K562 (cell line): ENCODE measurements at regions of chr9 and their contacts with region 1.

Region 1: GRCh38 chr9:76297721-76298239 is 96.4 kb downstream of the RFK start:
- DNase-seq: no peak
- ATAC-seq: 0 out of 3 replicates have a peak, but pooled peaks have one; percentile 44
- H3K4me3 ChIP-seq: no peak overlapping the region
- H3K27ac ChIP-seq: no peak overlapping the region
- H3K4me1 ChIP-seq: no peaks in the 10 kb centered on the region
- H3K27me3 ChIP-seq: peaks cover 2 to 17% of the 10 kb centered on the region in 2 experiments; a peak in 3 of 5 replicates
- CTCF ChIP-seq: no peak
- EP300 ChIP-seq: no peak
- POLR2A ChIP-seq: no peak
- RAD21 ChIP-seq: no peak

Region 2: DNA sequence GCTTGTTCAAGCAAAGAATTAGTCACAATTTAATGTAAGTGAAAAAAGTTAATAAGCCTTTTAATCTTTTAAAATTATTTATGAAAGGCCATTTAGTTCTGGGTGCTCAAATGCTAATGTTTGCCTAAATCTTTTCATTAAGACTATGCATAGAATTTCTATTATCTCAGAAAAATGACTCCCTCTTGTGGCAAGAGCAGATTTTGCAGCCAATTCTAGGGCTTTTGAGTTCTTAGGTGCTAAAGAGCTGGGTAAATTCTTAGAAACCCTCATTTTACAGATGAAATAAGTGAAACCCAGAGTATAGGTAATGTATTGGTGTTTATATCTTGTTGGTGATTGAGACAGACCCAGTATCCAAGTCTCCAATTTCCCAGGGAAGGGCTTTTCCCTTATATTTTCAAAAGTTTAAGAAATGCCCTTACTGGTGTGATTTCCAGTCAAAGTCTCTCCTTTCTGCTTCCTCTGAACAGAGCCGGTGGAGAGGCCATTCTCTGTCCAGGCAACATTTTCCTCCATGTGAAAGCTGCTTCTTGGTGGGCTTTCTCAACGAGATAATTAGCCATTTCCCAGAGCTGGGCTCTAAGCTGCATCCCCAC is 431.4 kb before region 1 on chr9:
- CTCF ChIA-PET with region 1: no interaction called
- POLR2A ChIA-PET with region 1: no interaction called
- in situ Hi-C with region 1: no loop called
- intact Hi-C with region 1: loop called (anchors 10 kb)
- DNase-seq: peak; percentile 5 to 38 (median 8)
- ATAC-seq: no peak
- H3K4me3 ChIP-seq: no peak overlapping the region
- H3K27ac ChIP-seq: no peak overlapping the region
- H3K4me1 ChIP-seq: no peaks in the 10 kb centered on the region
- H3K27me3 ChIP-seq: no peaks in the 10 kb centered on the region
- CTCF ChIP-seq: peak; percentile 27 to 56 (median 45); a peak in 4 of 6 replicates
- EP300 ChIP-seq: no peak
- POLR2A ChIP-seq: no peak
- RAD21 ChIP-seq: peak; percentile 14 to 43

Region 3: DNA sequence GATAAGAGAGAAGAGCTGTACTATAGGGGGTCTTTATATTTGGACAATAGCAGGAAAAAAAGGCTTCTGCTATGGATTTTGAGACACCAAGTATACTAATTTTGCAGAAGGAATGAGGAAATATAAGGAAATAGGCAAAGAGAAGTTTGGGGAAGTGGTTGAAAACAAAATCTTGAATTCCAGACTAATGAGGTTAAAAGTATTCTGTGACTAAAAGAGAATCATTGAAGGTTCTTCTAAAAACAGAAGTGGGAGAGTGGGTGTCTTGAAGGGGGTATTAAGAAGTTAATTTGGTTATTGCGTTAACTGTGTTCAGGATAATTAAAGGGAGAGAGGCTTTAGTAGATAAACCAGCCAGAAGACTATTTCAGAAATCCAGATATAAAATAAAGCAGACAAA is 52.3 kb before region 1 on chr9:
- CTCF ChIA-PET with region 1: no interaction called
- POLR2A ChIA-PET with region 1: no interaction called
- in situ Hi-C with region 1: no loop called
- intact Hi-C with region 1: no loop called
- DNase-seq: no peak
- ATAC-seq: no peak
- H3K4me3 ChIP-seq: no peak overlapping the region
- H3K27ac ChIP-seq: no peak overlapping the region
- H3K4me1 ChIP-seq: no peaks in the 10 kb centered on the region
- H3K27me3 ChIP-seq: no peaks in the 10 kb centered on the region
- CTCF ChIP-seq: no peak
- EP300 ChIP-seq: no peak
- POLR2A ChIP-seq: no peak
- RAD21 ChIP-seq: no peak